ENCODE measurements at regions of chr15 and their contacts with region 1.

Region 1: DNA sequence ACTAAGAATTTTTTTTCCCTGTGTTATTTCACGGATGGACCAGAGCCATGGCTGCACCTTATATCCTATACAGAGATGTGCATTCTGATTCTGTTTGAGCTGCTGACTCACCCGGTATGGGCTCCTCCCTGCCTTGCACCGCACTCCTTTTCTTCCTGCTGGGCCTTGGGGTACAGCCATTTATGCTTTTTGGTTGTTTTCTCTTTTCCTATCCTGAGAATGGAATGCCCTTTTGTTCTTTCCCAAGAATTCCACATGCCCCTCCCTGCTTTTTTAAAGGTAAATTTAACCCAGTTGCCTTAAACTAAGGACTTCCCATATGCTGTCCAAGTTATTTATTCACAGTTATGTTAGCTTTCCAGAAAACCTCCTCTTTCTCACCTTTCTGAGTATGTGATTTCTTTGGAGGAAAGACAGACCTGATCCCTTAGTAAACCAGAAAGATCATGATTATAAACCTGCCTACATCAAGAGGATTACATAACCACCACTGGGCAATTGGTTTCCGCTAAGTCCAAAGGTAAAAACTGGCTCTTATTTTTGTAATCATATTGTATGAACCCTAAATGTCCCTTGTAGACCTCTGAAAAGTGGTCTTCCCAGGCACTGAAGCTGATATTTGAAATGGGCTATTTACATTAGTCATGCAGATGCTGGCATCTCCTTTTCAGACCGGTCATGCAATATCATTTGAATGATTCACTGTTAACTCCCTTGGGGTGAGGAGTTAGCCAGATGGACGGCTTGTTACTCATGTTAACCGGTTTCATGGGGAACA is 45.5 kb downstream of the TMOD3 start:
- DNase-seq: peak; percentile 87
- H3K4me3 ChIP-seq: no peak overlapping the region
- H3K27ac ChIP-seq: peak overlapping the region; percentile 58
- H3K4me1 ChIP-seq: peaks cover 27% of the 10 kb centered on the region
- H3K27me3 ChIP-seq: no peaks in the 10 kb centered on the region
- CTCF ChIP-seq: no peak

Region 2: DNA sequence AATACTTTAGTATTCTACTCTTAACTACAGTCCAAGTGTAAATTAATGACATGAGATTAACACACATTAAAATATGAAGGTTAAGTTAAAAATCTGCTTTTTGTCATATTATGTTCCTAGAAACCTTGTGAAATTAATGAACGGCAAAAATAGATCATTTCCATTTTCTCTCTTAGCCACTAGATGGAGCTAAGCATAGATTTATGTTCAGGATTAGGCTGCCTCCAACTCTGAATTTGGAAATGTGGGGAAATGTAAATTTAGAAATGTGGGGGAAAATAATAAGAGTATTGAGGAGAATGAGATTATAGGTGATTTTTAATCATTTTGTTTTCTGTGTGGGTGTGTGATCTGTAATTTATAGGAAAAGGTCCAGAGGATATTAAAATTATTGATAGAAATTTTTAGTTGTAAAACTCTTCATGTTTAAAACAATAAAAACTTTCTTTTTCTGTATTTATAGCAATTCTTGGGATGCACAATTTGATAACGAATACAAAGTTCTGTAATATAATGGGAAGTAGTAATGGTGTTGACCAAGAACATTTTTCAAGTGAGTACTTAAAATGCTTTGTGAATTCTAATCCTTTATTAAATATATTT is 13.8 kb after region 1 on chr15:
- CTCF ChIA-PET with region 1: interaction called, 10 read pairs
- POLR2A ChIA-PET with region 1: no interaction called
- intact Hi-C with region 1: no loop called
- DNase-seq: peak; percentile 48
- H3K4me3 ChIP-seq: no peak overlapping the region
- H3K27ac ChIP-seq: no peak overlapping the region
- H3K4me1 ChIP-seq: peaks cover 14% of the 10 kb centered on the region
- H3K27me3 ChIP-seq: no peaks in the 10 kb centered on the region
- CTCF ChIP-seq: peak; percentile 86

Region 3: GRCh38 chr15:52019388-52020220 is 144.7 kb after region 1 on chr15:
- CTCF ChIA-PET with region 1: interaction called, 14 read pairs
- POLR2A ChIA-PET with region 1: no interaction called
- intact Hi-C with region 1: no loop called
- DNase-seq: peak; percentile 71
- H3K4me3 ChIP-seq: peak overlapping the region; percentile 85
- H3K27ac ChIP-seq: peak overlapping the region; percentile 91
- H3K4me1 ChIP-seq: peaks cover 13% of the 10 kb centered on the region
- H3K27me3 ChIP-seq: no peaks in the 10 kb centered on the region
- CTCF ChIP-seq: no peak